ENCODE measurements at regions of chr2 and their contacts with region 1.

Region 1: DNA sequence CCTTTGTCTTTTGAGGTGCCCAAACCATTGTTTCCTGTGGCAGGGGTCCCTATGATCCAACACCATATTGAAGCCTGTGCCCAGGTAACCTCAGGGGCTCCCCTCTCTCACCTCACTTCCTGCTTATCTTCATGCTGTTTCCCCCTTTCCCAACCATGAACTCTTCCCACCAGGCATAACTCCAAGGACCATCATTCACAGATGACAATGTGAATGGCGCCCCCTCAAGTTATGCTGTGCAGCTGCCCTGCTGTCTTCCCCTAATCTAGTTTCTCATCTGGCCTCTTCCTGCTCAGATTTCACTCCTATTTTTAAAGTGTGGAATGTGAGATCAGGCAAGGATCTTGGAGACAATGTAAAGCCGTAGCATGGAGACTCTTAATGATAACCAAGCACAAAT is 1.4 kb downstream of the GMPPA start:
- DNase-seq: no peak
- H3K4me3 ChIP-seq: no peak overlapping the region
- H3K27ac ChIP-seq: no peak overlapping the region
- H3K4me1 ChIP-seq: peaks cover 0 to 40% (median 37%) of the 10 kb centered on the region in 4 donors
- H3K27me3 ChIP-seq: no peaks in the 10 kb centered on the region
- CTCF ChIP-seq: no peak

Region 2: DNA sequence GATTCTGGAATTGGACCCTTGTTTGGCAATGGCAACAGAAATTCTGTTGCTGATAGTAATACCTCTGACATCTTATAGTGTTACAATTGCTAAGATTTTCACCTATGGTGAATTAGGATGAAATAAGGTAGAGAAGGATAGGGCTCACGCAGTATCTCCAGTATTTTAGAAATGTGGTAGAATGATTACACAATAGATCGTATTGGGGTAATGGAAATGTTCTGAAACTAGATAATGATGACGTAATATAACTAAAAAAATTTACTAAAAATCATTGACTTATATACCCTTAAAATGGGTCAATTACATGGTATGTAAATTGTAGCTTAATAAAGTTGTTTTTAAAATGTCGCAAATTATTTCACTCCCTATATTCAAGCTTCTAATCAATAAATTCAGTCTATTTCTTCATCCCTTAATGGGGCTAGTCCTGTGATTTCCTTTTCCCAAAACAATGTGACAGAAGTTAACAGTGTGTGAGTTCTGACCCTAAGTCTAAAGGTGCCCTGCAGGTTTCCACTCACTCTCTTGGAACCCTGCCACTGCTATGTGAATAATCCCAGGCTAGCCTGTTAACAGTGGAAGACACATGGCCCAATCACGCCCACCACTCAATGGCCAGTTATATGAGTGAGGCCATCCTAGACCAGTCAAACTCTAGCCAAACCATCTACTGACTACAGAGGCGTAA is 963.2 kb before region 1 on chr2:
- intact Hi-C with region 1: no loop called
- DNase-seq: no peak
- H3K4me3 ChIP-seq: no peak overlapping the region
- H3K27ac ChIP-seq: no peak overlapping the region
- H3K4me1 ChIP-seq: no peaks in the 10 kb centered on the region
- H3K27me3 ChIP-seq: no peaks in the 10 kb centered on the region
- CTCF ChIP-seq: no peak

Region 3: DNA sequence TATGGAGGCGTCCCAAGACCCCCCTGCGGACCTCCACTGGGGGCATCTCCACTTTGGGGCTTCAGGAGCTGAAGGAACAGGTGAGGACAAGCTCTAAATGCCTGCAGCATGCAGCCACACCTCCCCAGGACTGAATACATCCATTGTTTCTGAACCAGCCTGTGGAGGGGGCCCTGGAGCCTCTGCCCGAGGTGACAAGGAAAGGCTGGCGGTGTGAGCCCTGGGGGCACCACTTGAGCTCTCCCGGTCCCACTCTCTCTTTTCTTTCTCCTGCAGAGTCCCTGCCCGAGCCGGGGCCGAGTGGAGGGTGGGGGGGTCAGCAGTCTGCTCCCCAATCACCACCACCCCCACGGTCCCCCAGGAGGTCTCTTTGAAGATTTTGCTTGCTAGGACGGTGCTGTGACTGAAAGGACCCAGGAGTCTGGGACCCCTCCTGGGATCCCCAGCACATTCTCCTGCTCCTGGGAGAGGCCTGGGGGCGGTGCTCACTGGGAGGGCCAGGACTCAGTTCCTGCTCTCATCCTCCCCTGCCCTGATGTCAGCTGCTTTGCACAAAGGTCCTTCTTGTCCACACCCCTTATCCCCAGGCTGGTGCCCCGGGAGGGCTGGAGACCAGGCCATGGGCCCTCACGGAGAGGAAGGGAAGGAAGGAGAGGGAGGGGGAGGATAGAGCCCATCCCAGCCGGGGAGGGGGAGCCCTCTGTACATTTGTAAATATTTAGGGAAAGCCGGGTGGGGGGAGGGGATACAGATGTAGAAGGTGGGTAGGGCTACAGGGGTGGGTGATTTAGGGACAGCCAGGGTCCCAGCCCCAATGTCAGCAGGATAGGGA is 37.7 kb after region 1 on chr2:
- intact Hi-C with region 1: loop called (anchors 5 kb)
- DNase-seq: no peak
- H3K4me3 ChIP-seq: no peak overlapping the region
- H3K27ac ChIP-seq: no peak overlapping the region
- H3K4me1 ChIP-seq: peaks cover 0 to 16% (median 15%) of the 10 kb centered on the region in 4 donors
- H3K27me3 ChIP-seq: no peaks in the 10 kb centered on the region
- CTCF ChIP-seq: no peak

Measured in tibial artery (tissue), 4 donors.